AG04450 (cell line): ENCODE measurements at regions of chr1 and their contacts with region 1.

Region 1: DNA sequence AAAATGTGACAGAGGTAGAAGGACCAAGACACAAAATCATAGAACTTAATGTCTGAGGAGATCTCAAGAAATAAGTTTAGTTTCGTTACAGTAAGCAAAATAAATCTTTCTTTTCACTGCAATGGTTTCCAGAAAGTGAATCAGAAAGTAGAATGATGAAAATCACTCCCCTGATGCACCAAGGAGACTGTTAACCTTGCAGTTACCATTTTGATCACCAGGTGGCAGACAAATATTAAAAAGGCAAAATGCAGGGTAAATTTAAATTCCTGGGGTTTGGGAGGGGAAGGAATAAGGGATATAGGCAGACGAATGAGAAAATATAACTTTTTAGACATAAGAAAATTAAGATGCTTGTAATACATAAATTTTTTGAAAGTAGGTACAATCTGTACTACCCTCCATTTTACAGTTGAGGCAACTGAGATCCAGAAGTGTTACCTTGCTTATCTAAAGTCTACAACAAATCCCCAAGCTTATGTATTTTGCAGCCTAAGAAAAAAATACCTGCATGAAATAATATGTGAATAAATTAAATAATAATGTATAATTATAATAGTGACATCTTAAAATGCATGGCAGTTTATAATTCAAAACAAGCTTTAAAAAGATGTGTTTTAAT is 253.2 kb downstream of the CRB1 start:
- DNase-seq: peak; percentile 8
- H3K4me3 ChIP-seq: no peak overlapping the region
- H3K27ac ChIP-seq: no peak overlapping the region
- H3K27me3 ChIP-seq: no peaks in the 10 kb centered on the region
- CTCF ChIP-seq: peak; percentile 76

Region 2: DNA sequence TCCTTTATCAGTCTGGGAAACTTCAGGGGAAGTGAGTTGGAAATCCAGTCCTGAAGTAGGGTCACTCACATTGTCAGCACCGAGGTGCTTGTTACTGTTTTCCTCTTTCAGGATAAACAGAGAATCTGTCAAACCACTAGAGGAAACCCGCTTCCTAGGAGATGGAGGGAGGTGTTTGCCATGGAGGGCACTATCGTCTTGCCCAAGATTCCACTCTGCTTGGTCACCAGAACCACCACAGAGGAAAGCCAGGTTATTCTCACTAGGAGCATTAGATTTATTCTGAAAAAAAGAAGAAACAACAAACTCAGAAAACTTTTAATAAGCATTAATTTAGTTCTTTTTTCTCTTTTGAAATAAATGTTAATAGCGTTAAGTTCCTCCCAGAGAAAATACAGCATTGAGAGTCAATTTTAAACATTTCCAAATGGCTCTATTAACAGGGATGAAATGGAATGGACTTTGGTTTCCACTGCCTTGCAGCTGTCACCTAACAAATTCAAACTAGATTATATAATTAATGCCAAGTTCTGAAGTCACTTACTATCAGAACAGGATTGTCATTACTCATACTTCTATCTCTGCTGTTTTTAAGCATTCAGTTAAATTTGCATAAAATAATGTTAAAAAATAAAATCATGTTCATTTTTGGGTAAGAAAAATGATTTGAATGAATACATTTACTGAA is 10.4 kb before region 1 on chr1:
- CTCF ChIA-PET with region 1: interaction called, 12 read pairs
- POLR2A ChIA-PET with region 1: no interaction called
- DNase-seq: no peak
- H3K4me3 ChIP-seq: no peak overlapping the region
- H3K27ac ChIP-seq: no peak overlapping the region
- H3K27me3 ChIP-seq: no peaks in the 10 kb centered on the region
- CTCF ChIP-seq: no peak

Region 3: GRCh38 chr1:197541411-197541810 is 20.2 kb after region 1 on chr1:
- CTCF ChIA-PET with region 1: interaction called, 21 read pairs
- POLR2A ChIA-PET with region 1: no interaction called
- DNase-seq: no peak
- H3K4me3 ChIP-seq: no peak overlapping the region
- H3K27ac ChIP-seq: no peak overlapping the region
- H3K27me3 ChIP-seq: no peaks in the 10 kb centered on the region
- CTCF ChIP-seq: no peak

Region 4: GRCh38 chr1:197924516-197925123 is 403.4 kb after region 1 on chr1:
- CTCF ChIA-PET with region 1: interaction called, 42 read pairs
- POLR2A ChIA-PET with region 1: no interaction called
- DNase-seq: peak; percentile 16
- H3K4me3 ChIP-seq: no peak overlapping the region
- H3K27ac ChIP-seq: no peak overlapping the region
- H3K27me3 ChIP-seq: peaks cover 57% of the 10 kb centered on the region
- CTCF ChIP-seq: peak; percentile 82